ENCODE measurements at regions of chr1 and their contacts with region 1.

Region 1: DNA sequence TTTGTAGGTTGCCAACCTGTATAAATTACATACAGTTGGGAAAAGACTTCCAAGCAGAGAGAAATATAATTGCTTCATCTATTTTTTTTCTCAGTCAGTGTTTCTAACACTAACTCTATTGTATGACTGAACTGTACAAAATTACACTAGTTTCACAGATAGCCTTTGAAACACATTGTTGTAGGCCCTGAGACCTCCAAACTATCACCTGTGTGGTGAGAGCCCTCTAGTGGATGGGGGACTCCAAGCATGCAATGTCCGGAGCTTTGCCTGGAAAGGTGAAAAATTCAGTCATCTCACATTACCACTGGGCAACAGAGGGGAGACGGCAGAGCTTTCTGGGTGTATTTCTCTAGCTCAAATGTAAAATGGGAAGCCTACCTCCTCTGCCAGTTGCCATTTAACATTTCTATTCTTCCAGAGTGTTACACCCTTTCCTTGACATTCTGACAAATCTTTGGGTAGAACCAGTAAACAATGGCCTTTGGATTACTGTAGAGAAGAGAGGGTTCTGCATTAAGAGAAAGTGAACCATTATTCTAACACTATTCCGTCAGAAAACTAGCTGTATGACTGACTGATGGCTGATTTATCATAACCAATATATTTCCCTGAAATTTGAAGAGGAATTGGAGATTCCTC is 212.2 kb downstream of the LYPLAL1 start:
- DNase-seq: peak; percentile 55 to 67 (median 56)
- ATAC-seq: peak; percentile 99
- H3K4me3 ChIP-seq: no peak overlapping the region
- H3K27ac ChIP-seq: no peak overlapping the region
- H3K4me1 ChIP-seq: no peaks in the 10 kb centered on the region
- H3K27me3 ChIP-seq: no peaks in the 10 kb centered on the region
- CTCF ChIP-seq: peak; percentile 72 to 87 (median 80)
- EP300 ChIP-seq: no peak
- POLR2A ChIP-seq: no peak
- RAD21 ChIP-seq: peak; percentile 82 to 85

Region 2: GRCh38 chr1:218339267-218339831 is 1046.6 kb before region 1 on chr1:
- CTCF ChIA-PET with region 1: no interaction called
- POLR2A ChIA-PET with region 1: no interaction called
- in situ Hi-C with region 1: no loop called
- intact Hi-C with region 1: loop called (anchors 2 kb)
- DNase-seq: peak in 3 of 4 experiments; percentile 35 to 53 (median 40)
- ATAC-seq: peak; percentile 76
- H3K4me3 ChIP-seq: no peak overlapping the region
- H3K27ac ChIP-seq: no peak overlapping the region
- H3K4me1 ChIP-seq: no peaks in the 10 kb centered on the region
- H3K27me3 ChIP-seq: no peaks in the 10 kb centered on the region
- CTCF ChIP-seq: peak; percentile 40 to 75 (median 49); a peak in 4 of 6 replicates
- EP300 ChIP-seq: no peak
- POLR2A ChIP-seq: no peak
- RAD21 ChIP-seq: peak; percentile 73 to 84

Region 3: GRCh38 chr1:219058891-219059820 is 326.8 kb before region 1 on chr1:
- CTCF ChIA-PET with region 1: no interaction called
- POLR2A ChIA-PET with region 1: no interaction called
- in situ Hi-C with region 1: no loop called
- intact Hi-C with region 1: loop called (anchors 10 kb)
- DNase-seq: no peak
- ATAC-seq: no peak
- H3K4me3 ChIP-seq: no peak overlapping the region
- H3K27ac ChIP-seq: no peak overlapping the region
- H3K4me1 ChIP-seq: no peaks in the 10 kb centered on the region
- H3K27me3 ChIP-seq: no peaks in the 10 kb centered on the region
- CTCF ChIP-seq: no peak
- EP300 ChIP-seq: no peak
- POLR2A ChIP-seq: no peak
- RAD21 ChIP-seq: no peak

Region 4: DNA sequence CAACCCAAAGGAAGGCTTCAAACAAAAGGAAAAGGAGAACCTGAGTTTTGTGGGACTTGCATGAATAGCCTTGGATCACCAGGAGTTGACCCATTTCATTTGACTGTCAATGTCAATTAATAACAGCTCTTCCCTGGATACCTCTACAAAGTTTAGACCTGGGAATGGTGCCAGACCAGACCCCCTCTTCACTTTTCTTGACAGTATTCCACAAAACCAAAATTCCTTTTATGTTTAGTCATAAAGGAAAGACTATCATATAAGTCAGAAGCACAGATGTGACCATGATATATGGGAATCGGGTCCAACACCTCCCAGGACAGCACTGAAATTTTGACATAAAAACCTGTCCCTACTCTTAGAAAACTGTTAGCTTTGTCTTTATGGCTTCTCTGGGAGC is 20.5 kb before region 1 on chr1:
- CTCF ChIA-PET with region 1: no interaction called
- POLR2A ChIA-PET with region 1: no interaction called
- in situ Hi-C with region 1: no loop called
- intact Hi-C with region 1: loop called (anchors 1 kb)
- DNase-seq: no peak
- ATAC-seq: no peak
- H3K4me3 ChIP-seq: no peak overlapping the region
- H3K27ac ChIP-seq: no peak overlapping the region
- H3K4me1 ChIP-seq: no peaks in the 10 kb centered on the region
- H3K27me3 ChIP-seq: no peaks in the 10 kb centered on the region
- CTCF ChIP-seq: no peak
- EP300 ChIP-seq: no peak
- POLR2A ChIP-seq: no peak
- RAD21 ChIP-seq: no peak

Measured in K562 (cell line).